Activated CD4-positive, alpha-beta T cell treated with anti-CD3 and anti-CD28 coated beads for 36 hours (primary cell): ENCODE measurements at regions of chr16 and their contacts with region 1.

Region 1: DNA sequence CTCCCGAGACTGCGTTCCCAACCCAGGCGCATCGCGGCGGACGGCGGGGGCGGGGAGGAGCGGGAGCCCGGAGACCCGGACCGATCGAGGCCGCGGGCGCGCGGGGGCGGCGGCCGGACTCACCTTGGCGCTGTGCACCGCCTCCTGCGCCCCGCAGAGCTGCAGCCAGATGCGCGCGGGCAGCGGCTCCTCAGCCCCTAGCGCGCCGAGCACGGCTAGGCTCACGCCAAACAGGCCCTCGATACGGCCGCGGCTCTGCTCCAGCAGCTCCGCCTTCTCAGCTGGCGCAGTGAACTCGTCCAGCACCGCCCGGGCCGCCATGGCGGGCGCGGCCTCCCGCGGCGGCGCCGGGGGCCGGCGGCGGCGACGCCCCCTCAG is 339 bp downstream of the N4BP1 start:
- DNase-seq: no peak
- ATAC-seq: peak; percentile 24
- H3K4me3 Mint-ChIP-seq: no peak overlapping the region
- H3K27ac Mint-ChIP-seq: no peak overlapping the region
- H3K4me1 Mint-ChIP-seq: peaks cover 39% of the 10 kb centered on the region
- H3K27me3 Mint-ChIP-seq: no peaks in the 10 kb centered on the region

Region 2: GRCh38 chr16:46830902-46831647 is 1778.6 kb before region 1 on chr16 and contains the start of gene C16orf87:
- CTCF ChIA-PET with region 1: no interaction called
- POLR2A ChIA-PET with region 1: no interaction called
- intact Hi-C with region 1: loop called in 1 of 2 experiments (anchors 2 kb)
- DNase-seq: peak; percentile 95
- ATAC-seq: peak; percentile 96
- H3K4me3 Mint-ChIP-seq: peak within 1 kb of the TSS; percentile 93
- H3K27ac Mint-ChIP-seq: peak within 1 kb of the TSS; percentile 98
- H3K4me1 Mint-ChIP-seq: peaks cover 36% of the 10 kb centered on the region
- H3K27me3 Mint-ChIP-seq: no peaks in the 10 kb centered on the region
- total RNA-seq, gene C16orf87: 14.6 to 17.2 TPM

Region 3: GRCh38 chr16:47460711-47461597 is 1148.7 kb before region 1 on chr16 and contains the starts of genes ITFG1 and PHKB:
- CTCF ChIA-PET with region 1: no interaction called
- POLR2A ChIA-PET with region 1: no interaction called
- intact Hi-C with region 1: loop called in 1 of 2 experiments (anchors 2 kb)
- DNase-seq: peak; percentile 97
- ATAC-seq: peak; percentile 95
- H3K4me3 Mint-ChIP-seq: peak within 1 kb of the TSS; percentile 97
- H3K27ac Mint-ChIP-seq: peak within 1 kb of the TSS; percentile 97
- H3K4me1 Mint-ChIP-seq: peaks cover 58% of the 10 kb centered on the region
- H3K27me3 Mint-ChIP-seq: no peaks in the 10 kb centered on the region
- total RNA-seq, gene ITFG1: 18.9 to 27.0 TPM
- total RNA-seq, gene PHKB: 12.6 to 12.8 TPM

Region 4: GRCh38 chr16:48365581-48366164 is 244.0 kb before region 1 on chr16:
- CTCF ChIA-PET with region 1: no interaction called
- POLR2A ChIA-PET with region 1: interaction called, 3 read pairs
- intact Hi-C with region 1: loop called in 1 of 2 experiments (anchors 1 kb)
- DNase-seq: peak; percentile 93
- ATAC-seq: peak; percentile 96
- H3K4me3 Mint-ChIP-seq: peak overlapping the region; percentile 90
- H3K27ac Mint-ChIP-seq: peak overlapping the region; percentile 99
- H3K4me1 Mint-ChIP-seq: peaks cover 56% of the 10 kb centered on the region
- H3K27me3 Mint-ChIP-seq: no peaks in the 10 kb centered on the region

Region 5: DNA sequence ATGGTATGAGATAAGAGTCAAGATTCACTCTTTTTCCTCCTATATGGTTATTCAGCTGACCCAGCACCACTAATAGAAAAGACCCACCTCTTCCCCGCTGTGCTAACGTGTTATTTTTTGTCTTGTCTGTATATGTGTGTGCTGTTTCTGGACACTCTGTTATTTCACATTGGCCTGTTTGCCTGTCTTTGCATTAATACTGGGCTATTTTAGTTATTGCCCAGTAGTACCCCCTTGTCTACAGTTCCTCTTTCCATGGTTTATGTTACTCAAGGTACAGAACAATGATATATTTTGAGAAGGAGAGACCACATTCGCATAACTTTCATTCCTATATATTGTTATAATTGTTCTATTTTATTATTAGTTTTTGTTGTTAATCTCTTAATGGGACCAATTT is 150.5 kb before region 1 on chr16:
- CTCF ChIA-PET with region 1: no interaction called
- POLR2A ChIA-PET with region 1: no interaction called
- intact Hi-C with region 1: loop called (anchors 1 to 5 kb)
- DNase-seq: no peak
- ATAC-seq: no peak
- H3K4me3 Mint-ChIP-seq: no peak overlapping the region
- H3K27ac Mint-ChIP-seq: no peak overlapping the region
- H3K4me1 Mint-ChIP-seq: peaks cover 9% of the 10 kb centered on the region
- H3K27me3 Mint-ChIP-seq: peaks cover 35% of the 10 kb centered on the region

Region 6: DNA sequence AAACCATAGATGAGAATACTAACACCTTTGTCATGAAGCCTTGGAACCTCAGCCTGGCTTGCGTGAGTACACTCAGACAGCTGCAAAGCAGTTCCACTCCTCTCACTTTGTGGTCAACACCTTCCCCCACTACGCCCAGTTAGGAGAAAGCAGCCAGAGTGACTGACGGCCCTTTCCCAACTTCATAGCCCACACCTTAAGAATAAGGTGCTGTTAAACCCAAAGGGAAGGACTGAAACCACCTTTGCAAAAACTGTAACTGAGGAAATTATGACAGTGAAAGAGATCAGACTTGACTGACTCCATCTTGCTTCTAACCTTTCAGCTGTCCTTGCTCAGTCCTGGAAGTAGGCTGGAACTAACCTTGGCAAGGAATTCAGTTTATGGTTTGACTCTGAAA is 13.3 kb before region 1 on chr16:
- CTCF ChIA-PET with region 1: interaction called, 3 read pairs
- POLR2A ChIA-PET with region 1: interaction called, 3 read pairs
- intact Hi-C with region 1: loop called in 1 of 2 experiments (anchors 1 kb)
- DNase-seq: peak; percentile 76
- ATAC-seq: peak; percentile 90
- H3K4me3 Mint-ChIP-seq: no peak overlapping the region
- H3K27ac Mint-ChIP-seq: peak overlapping the region; percentile 82
- H3K4me1 Mint-ChIP-seq: peaks cover 53% of the 10 kb centered on the region
- H3K27me3 Mint-ChIP-seq: no peaks in the 10 kb centered on the region

Region 7: DNA sequence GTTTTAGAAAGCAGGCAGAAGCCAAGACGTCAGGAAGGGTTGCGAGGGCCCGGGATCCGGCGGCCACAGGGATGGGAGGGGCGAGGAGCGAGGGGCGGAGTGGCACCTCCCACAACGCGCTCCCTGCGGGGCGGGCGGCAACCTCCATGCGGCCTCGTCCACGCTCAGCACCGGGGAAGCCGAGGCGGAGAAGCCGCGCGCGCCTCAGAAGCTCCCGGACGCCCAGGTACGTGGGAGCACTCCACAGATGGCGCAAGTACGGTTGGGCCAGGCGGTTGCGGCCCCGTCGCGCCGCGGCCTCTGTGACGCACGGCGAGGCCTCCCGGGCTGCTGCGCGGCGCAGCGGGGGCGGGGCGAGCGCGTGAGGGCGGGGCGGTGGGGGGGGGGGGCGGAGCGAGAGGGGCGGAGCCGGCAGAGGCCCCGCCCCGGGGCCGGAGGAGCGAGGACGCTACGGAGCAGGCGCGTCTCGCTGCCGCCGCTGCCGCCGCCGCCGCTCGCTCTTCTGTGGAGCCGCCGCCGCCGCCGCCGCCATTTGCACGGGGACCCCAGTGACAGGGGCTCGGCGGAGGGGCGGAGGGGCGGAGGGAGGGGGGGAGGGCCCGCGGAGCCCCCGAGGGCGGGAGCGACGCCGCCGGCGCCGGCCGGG is 1543.3 kb after region 1 on chr16 and contains the start of gene TENT4B:
- CTCF ChIA-PET with region 1: no interaction called
- POLR2A ChIA-PET with region 1: no interaction called
- intact Hi-C with region 1: loop called in 1 of 2 experiments (anchors 10 kb)
- DNase-seq: peak; percentile 92
- ATAC-seq: peak; percentile 71
- H3K4me3 Mint-ChIP-seq: peak within 1 kb of the TSS; percentile 79
- H3K27ac Mint-ChIP-seq: peak within 1 kb of the TSS; percentile 98
- H3K4me1 Mint-ChIP-seq: peaks cover 39% of the 10 kb centered on the region
- H3K27me3 Mint-ChIP-seq: no peaks in the 10 kb centered on the region
- total RNA-seq, gene TENT4B: 19.3 to 22.4 TPM